Mammary epithelial cell (primary cell): ENCODE measurements at regions of chr22 and their contacts with region 1.

Region 1: GRCh38 chr22:17785185-17786184 is 11.2 kb upstream of the BID start:
- DNase-seq: peak; percentile 39
- H3K4me3 ChIP-seq: no peak overlapping the region
- H3K27ac ChIP-seq: no peak overlapping the region
- H3K4me1 ChIP-seq: peaks cover 33% of the 10 kb centered on the region
- H3K27me3 ChIP-seq: no peaks in the 10 kb centered on the region
- CTCF ChIP-seq: peak; percentile 61 to 72

Region 2: GRCh38 chr22:17077255-17077654 is 708.2 kb before region 1 on chr22:
- CTCF ChIA-PET with region 1: no interaction called
- dilution Hi-C with region 1: no loop called
- in situ Hi-C with region 1: no loop called
- intact Hi-C with region 1: loop called (anchors 5 kb)
- DNase-seq: peak; percentile 70
- H3K4me3 ChIP-seq: no peak overlapping the region
- H3K27ac ChIP-seq: no peak overlapping the region
- H3K4me1 ChIP-seq: peaks cover 16% of the 10 kb centered on the region
- H3K27me3 ChIP-seq: no peaks in the 10 kb centered on the region
- CTCF ChIP-seq: no peak

Region 3: DNA sequence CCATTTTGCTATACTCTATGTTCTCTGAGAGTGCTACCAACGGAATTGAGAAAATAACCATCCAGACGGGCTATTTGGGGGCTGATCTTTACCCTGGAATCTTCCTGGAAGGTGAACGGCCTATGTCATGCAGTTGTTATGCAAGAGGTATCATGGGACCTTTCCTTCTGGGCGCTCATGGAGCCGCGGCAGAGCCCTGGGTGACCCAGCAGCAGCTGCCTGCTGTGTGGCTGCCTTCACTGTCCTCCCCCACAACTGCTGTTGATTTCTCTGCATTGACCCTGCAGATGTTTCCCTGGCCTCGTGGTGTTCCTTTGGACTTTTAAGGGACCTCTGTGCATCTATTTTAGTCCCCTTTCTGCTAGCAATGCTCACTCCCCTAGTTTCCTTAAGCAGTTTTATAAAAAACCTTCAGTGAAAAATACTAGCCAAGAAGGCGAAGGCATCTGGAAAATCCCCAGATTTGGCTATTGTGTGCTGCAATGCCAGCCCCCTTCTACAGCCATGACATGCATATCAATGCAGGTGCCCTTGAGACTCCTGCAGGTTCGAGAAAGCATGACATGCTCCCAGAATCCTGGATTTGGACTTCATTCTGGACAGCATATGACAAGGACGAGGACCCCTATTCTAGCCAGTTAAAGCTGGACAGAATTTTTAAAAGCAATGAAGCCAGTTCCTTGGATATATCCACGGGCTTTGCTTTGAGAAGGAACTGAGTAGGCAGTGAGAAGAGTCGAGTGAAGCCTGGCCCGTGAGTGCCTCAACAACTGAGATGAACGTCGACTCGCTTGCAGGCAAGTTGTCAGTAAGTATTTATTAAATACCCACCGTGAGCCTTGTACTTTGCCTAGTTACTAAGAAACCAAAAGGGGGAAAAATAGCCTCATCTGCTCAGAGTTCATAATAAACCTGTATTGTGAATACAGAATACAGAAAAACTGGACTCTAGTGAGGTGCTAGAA is 222.3 kb before region 1 on chr22 and contains the start of gene SLC25A18:
- CTCF ChIA-PET with region 1: interaction called, 6 read pairs
- dilution Hi-C with region 1: no loop called
- in situ Hi-C with region 1: no loop called
- intact Hi-C with region 1: loop called (anchors 1 kb)
- DNase-seq: no peak
- H3K4me3 ChIP-seq: no peak within 1 kb of the TSS
- H3K27ac ChIP-seq: no peak within 1 kb of the TSS
- H3K4me1 ChIP-seq: no peaks in the 10 kb centered on the region
- H3K27me3 ChIP-seq: peaks cover 2% of the 10 kb centered on the region
- CTCF ChIP-seq: no peak
- total RNA-seq, gene SLC25A18: 0.33 TPM in 1 of 2 donors, not detected in the other

Region 4: GRCh38 chr22:17726464-17727246 is 58.8 kb before region 1 on chr22:
- CTCF ChIA-PET with region 1: no interaction called
- dilution Hi-C with region 1: loop called (anchors 5 kb)
- in situ Hi-C with region 1: no loop called
- intact Hi-C with region 1: no loop called
- DNase-seq: no peak
- H3K4me3 ChIP-seq: no peak overlapping the region
- H3K27ac ChIP-seq: no peak overlapping the region
- H3K4me1 ChIP-seq: peaks cover 14% of the 10 kb centered on the region
- H3K27me3 ChIP-seq: no peaks in the 10 kb centered on the region
- CTCF ChIP-seq: no peak

Region 5: GRCh38 chr22:17742527-17742902 is 43.0 kb before region 1 on chr22:
- CTCF ChIA-PET with region 1: interaction called, 6 read pairs
- dilution Hi-C with region 1: no loop called
- in situ Hi-C with region 1: no loop called
- intact Hi-C with region 1: loop called (anchors 1 kb)
- DNase-seq: peak; percentile 51
- H3K4me3 ChIP-seq: no peak overlapping the region
- H3K27ac ChIP-seq: no peak overlapping the region
- H3K4me1 ChIP-seq: peaks cover 12% of the 10 kb centered on the region
- H3K27me3 ChIP-seq: no peaks in the 10 kb centered on the region
- CTCF ChIP-seq: peak; percentile 81 to 89

Region 6: GRCh38 chr22:17824457-17824856 is 39.0 kb after region 1 on chr22:
- CTCF ChIA-PET with region 1: no interaction called
- dilution Hi-C with region 1: loop called (anchors 5 kb)
- in situ Hi-C with region 1: no loop called
- intact Hi-C with region 1: no loop called
- DNase-seq: no peak
- H3K4me3 ChIP-seq: no peak overlapping the region
- H3K27ac ChIP-seq: no peak overlapping the region
- H3K4me1 ChIP-seq: peaks cover 2% of the 10 kb centered on the region
- H3K27me3 ChIP-seq: no peaks in the 10 kb centered on the region
- CTCF ChIP-seq: no peak

Region 7: GRCh38 chr22:17891481-17892167 is 106.1 kb after region 1 on chr22:
- CTCF ChIA-PET with region 1: no interaction called
- dilution Hi-C with region 1: loop called (anchors 5 kb)
- in situ Hi-C with region 1: no loop called
- intact Hi-C with region 1: no loop called
- DNase-seq: no peak
- H3K4me3 ChIP-seq: no peak overlapping the region
- H3K27ac ChIP-seq: no peak overlapping the region
- H3K4me1 ChIP-seq: peaks cover 12% of the 10 kb centered on the region
- H3K27me3 ChIP-seq: no peaks in the 10 kb centered on the region
- CTCF ChIP-seq: peak; percentile 36 to 68